ENCODE measurements at regions of chr2 and their contacts with region 1.

Region 1: DNA sequence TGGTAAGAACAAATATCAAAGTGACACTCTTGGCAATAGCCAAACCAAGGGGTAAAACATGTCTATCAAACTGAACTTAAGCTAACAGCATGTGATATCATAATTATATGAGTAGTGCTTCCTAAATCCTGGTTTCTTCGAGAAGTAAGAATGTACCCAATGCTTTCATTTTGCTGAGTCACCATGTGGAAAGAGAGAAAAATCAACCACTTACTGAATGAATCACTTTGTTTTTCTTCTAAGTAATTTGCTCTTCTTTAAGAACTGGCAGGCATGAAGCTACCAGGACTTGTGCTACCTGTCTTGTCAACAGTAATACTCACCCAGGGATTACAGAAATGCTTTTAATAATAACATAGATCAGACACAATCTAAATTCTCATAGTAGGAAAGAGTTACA is 19.0 kb upstream of the DUSP19 start:
- DNase-seq: peak in 1 of 2 experiments; percentile 90
- H3K4me3 ChIP-seq: no peak overlapping the region
- H3K27ac ChIP-seq: peak overlapping the region; percentile 77
- H3K4me1 ChIP-seq: peaks cover 16% of the 10 kb centered on the region
- H3K27me3 ChIP-seq: no peaks in the 10 kb centered on the region
- CTCF ChIP-seq: no peak

Region 2: GRCh38 chr2:182866461-182867406 is 192.8 kb before region 1 on chr2 and contains the start of gene FRZB:
- CTCF ChIA-PET with region 1: no interaction called
- POLR2A ChIA-PET with region 1: no interaction called
- intact Hi-C with region 1: no loop called
- DNase-seq: peak in 1 of 2 experiments; percentile 28
- H3K4me3 ChIP-seq: no peak within 1 kb of the TSS
- H3K27ac ChIP-seq: no peak within 1 kb of the TSS
- H3K4me1 ChIP-seq: no peaks in the 10 kb centered on the region
- H3K27me3 ChIP-seq: no peaks in the 10 kb centered on the region
- CTCF ChIP-seq: no peak
- total RNA-seq, gene FRZB: 0.15 TPM in 2 replicates

Region 3: GRCh38 chr2:183038341-183039300 is 20.9 kb before region 1 on chr2 and contains the start of gene NCKAP1:
- CTCF ChIA-PET with region 1: interaction called, 9 read pairs
- POLR2A ChIA-PET with region 1: no interaction called
- intact Hi-C with region 1: loop called (anchors 1 kb)
- DNase-seq: peak; percentile 79 to 99
- H3K4me3 ChIP-seq: peak within 1 kb of the TSS; percentile 91
- H3K27ac ChIP-seq: peak within 1 kb of the TSS; percentile 87
- H3K4me1 ChIP-seq: peaks cover 35% of the 10 kb centered on the region
- H3K27me3 ChIP-seq: no peaks in the 10 kb centered on the region
- CTCF ChIP-seq: peak; percentile 73
- total RNA-seq, gene NCKAP1: 274 and 308 TPM in 2 replicates

Region 4: DNA sequence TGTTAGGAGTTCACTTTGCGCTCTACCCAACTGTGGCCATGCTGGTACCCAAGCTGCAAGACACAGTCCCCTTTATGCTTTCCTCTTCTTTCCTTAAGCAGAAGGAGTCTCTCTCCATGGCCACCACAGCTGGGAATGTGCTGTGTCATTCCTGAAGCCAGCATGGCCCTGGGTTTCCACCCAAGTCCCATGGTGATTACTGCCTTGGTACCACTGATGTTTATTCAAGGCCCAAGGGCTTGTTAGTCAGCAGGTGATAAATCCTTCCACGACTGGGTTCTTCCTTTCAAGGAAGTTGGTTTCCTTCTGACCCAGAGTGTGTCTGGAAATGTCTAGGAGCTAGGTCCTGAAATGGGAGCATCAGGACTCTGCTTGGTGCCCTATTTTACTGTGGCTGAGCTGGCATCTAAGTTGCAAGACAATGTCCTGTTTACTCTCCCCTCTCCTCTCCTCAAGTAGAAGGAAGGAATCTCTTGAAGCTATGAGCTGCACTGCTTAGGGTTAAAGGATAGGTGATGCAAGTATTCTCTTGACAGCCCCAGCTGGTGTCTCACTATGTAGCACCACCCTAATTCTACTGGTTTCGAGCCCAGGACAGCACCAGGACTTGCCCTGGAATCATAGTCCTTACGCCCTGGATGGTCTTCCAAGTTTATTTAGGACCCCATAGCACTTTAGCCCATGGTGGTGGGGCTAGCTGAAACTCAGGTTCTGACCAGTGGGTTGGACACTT is 46.0 kb after region 1 on chr2:
- CTCF ChIA-PET with region 1: no interaction called
- POLR2A ChIA-PET with region 1: no interaction called
- intact Hi-C with region 1: no loop called
- DNase-seq: no peak
- H3K4me3 ChIP-seq: no peak overlapping the region
- H3K27ac ChIP-seq: no peak overlapping the region
- H3K4me1 ChIP-seq: 0 out of 2 replicates have a peak, but pooled peaks cover 5% of the 10 kb centered on the region
- H3K27me3 ChIP-seq: no peaks in the 10 kb centered on the region
- CTCF ChIP-seq: no peak